Heart left ventricle (tissue), 16 donors: ENCODE measurements at regions of chr4 and their contacts with region 1.

Region 1: GRCh38 chr4:121462660-121463261 is 81.9 kb upstream of the QRFPR start:
- DNase-seq: peak in 4 of 5 donors; percentile 30 to 58 (median 38)
- ATAC-seq: peak; percentile 42 to 82 (median 74)
- H3K4me3 ChIP-seq: no peak overlapping the region
- H3K27ac ChIP-seq: no peak overlapping the region
- H3K4me1 ChIP-seq: peaks cover 0 to 6% (median 0%) of the 10 kb centered on the region in 12 donors
- H3K27me3 ChIP-seq: no peaks in the 10 kb centered on the region
- CTCF ChIP-seq: peak; percentile 51 to 79 (median 68)
- POLR2A ChIP-seq: no peak

Region 2: GRCh38 chr4:121656269-121656641 is 193.5 kb after region 1 on chr4:
- intact Hi-C with region 1: loop called (anchors 2 to 10 kb)
- DNase-seq: peak in 4 of 5 donors; percentile 33 to 50 (median 40)
- ATAC-seq: peak; percentile 76 to 91 (median 80)
- H3K4me3 ChIP-seq: no peak overlapping the region
- H3K27ac ChIP-seq: peak overlapping the region in 1 of 12 donors; percentile 43
- H3K4me1 ChIP-seq: peaks cover 0 to 11% (median 0%) of the 10 kb centered on the region in 12 donors
- H3K27me3 ChIP-seq: no peaks in the 10 kb centered on the region
- CTCF ChIP-seq: peak in 10 of 12 donors; percentile 10 to 54 (median 38)
- POLR2A ChIP-seq: no peak

Region 3: GRCh38 chr4:121736735-121737351 is 274.1 kb after region 1 on chr4:
- intact Hi-C with region 1: loop called in 2 of 10 experiments (anchors 5 to 10 kb)
- DNase-seq: peak in 1 of 5 donors; percentile 18
- ATAC-seq: peak in 1 of 4 donors; percentile 28
- H3K4me3 ChIP-seq: no peak overlapping the region
- H3K27ac ChIP-seq: no peak overlapping the region
- H3K4me1 ChIP-seq: peaks cover 0 to 22% (median 0%) of the 10 kb centered on the region in 12 donors
- H3K27me3 ChIP-seq: peaks cover 0 to 3% (median 0%) of the 10 kb centered on the region in 9 donors
- CTCF ChIP-seq: peak in 11 of 12 donors; percentile 14 to 61 (median 44)
- POLR2A ChIP-seq: no peak

Region 4: GRCh38 chr4:121811122-121811521 is 348.4 kb after region 1 on chr4:
- intact Hi-C with region 1: no loop called
- DNase-seq: no peak
- ATAC-seq: no peak
- H3K4me3 ChIP-seq: no peak overlapping the region
- H3K27ac ChIP-seq: no peak overlapping the region
- H3K4me1 ChIP-seq: no peaks in the 10 kb centered on the region
- H3K27me3 ChIP-seq: no peaks in the 10 kb centered on the region
- CTCF ChIP-seq: no peak
- POLR2A ChIP-seq: no peak